ENCODE measurements at regions of chrX and their contacts with region 1.

Region 1: DNA sequence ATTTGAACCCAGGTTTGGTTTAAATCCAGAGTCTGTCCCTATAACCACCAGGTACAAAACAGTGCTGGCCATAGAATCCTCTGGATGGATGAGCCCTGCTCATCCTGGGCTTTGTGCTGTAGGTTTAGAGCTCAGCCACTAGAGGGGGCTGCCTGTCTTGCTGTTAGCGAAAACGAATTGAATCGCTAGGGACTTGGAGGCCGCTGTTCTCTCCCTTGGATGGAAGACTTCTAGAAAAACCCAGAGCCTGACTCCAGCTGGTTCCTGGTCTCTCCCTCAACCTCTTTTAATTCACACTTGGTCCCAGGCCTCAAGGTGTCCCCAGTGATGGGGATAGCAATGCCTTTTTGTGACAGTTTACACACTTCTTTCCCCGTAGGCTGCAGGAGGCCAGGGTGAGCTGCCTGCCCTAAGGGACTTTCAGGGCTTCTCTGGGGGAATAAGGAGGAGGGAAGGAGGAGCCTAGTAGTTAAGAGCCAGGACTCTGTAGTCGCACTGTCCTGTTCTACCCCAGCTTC is 8.7 kb downstream of the RIPPLY1 start:
- DNase-seq: peak; percentile 24
- ATAC-seq: peak; percentile 88

Region 2: DNA sequence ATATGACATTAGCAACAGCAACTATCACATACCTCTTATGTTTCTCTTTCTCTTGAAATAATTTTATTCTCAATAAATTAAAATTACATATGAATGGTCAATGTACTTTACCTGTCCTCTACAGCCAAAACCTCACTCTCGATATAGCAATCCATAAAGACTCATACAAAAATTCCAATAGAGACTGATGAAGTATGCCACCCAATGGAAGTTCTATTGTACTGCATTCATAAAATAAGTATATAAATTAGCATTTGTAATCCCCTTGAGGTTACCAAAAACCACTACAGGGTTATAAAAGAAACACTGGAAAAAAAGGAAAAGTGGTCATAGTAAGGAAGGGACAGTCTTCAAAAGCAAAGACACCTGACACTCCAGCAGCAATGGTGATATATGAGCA is 58.5 kb after region 1 on chrX:
- intact Hi-C with region 1: loop called (anchors 5 kb)
- DNase-seq: no peak
- ATAC-seq: no peak

Measured in left ventricle myocardium superior (tissue), 1 donor.